ENCODE measurements at regions of chr11 and their contacts with region 1.

Region 1: DNA sequence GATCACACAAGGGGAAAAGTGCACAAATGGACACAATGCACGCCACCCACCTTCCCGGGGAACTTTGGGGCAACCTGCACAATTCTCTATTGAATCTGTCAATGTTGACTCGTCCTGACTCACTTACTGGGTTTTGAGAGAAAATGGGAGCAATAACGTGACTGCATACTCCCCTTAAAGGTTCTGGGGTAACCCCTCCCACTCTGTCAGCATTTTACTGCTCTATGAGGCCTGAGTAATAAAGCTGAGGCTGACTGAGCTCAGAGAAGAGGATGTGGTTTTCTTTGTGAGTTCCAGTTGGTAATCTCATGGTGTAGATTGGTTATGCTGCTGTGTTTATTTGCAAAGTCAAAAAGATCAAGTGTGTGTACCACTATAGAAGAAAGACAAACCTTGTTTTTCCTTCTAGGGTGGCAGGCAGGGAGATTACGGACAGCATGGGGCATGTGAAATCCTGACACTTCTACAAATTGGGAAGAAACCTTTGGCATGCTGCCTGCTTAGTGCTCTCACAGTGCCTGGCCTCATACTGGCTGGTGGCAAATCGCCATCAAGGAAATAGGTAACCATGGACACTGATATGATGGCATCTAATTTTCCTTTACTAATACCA is 16.1 kb upstream of the APOA1 start:
- DNase-seq: peak; percentile 81 to 91 (median 85)
- H3K4me3 ChIP-seq: peak overlapping the region; percentile 8 to 38
- H3K4me3 Mint-ChIP-seq: peak overlapping the region; percentile 53 to 90 (median 77)
- H3K27ac ChIP-seq: peak overlapping the region; percentile 52
- H3K27ac Mint-ChIP-seq: peak overlapping the region; percentile 83 to 98 (median 95)
- H3K4me1 ChIP-seq: peaks cover 81% of the 10 kb centered on the region
- H3K4me1 Mint-ChIP-seq: peaks cover 67 to 84% (median 74%) of the 10 kb centered on the region in 4 donors
- H3K27me3 ChIP-seq: no peaks in the 10 kb centered on the region
- H3K27me3 Mint-ChIP-seq: no peaks in the 10 kb centered on the region

Region 2: DNA sequence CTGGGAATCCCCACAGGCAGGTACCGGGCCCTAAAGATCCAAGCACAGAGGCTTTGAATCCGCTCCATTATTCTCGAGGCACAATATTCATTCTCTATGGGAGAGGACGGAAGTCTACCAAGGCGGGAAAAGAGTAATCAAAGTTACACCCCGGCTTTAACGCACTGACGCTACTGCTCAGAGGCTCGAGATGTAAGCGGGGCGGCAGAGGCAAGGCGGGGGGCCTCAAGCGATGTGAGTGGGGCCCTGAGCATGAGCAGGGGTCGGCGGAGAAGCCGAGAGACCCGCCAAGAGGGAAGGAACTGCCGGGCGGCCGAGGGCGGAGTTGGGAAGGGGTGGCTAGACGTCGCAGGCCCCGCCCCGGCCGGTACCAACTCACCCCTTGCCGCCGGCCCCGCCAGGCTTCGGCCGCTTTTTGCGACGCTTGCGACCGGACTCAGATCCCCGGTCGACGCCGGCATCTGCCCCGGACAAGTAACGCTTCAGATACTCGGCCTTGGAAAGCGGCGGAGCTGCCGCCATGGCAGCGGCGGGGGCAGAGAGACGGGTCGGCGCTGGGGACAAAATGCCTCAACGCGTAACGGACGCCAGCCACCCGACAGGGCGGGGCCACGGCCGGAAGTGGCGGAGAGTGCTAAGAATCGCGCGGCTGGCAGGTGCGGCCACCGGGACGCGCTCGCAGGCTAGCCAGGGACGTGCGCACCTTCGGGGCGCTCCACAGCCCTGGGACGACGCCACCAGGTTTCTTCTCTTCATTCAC is 80.9 kb before region 1 on chr11 and contains the start of gene BUD13:
- CTCF ChIA-PET with region 1: interaction called, 3 read pairs
- POLR2A ChIA-PET with region 1: interaction called, 4 read pairs
- intact Hi-C with region 1: loop called (anchors 5 kb)
- DNase-seq: peak; percentile 92 to 96 (median 93)
- H3K4me3 ChIP-seq: peak within 1 kb of the TSS; percentile 71 to 93
- H3K4me3 Mint-ChIP-seq: peak within 1 kb of the TSS; percentile 97 to 100 (median 98)
- H3K27ac ChIP-seq: peak within 1 kb of the TSS; percentile 94
- H3K27ac Mint-ChIP-seq: peak within 1 kb of the TSS; percentile 94 to 99 (median 98)
- H3K4me1 ChIP-seq: peaks cover 24% of the 10 kb centered on the region
- H3K4me1 Mint-ChIP-seq: peaks cover 24 to 47% (median 35%) of the 10 kb centered on the region in 4 donors
- H3K27me3 ChIP-seq: no peaks in the 10 kb centered on the region
- H3K27me3 Mint-ChIP-seq: no peaks in the 10 kb centered on the region
- total RNA-seq, gene BUD13: 19.9 to 23.1 TPM

Region 3: GRCh38 chr11:116787786-116788486 is 65.6 kb before region 1 on chr11 and contains the start of gene ZPR1:
- CTCF ChIA-PET with region 1: interaction called, 62 read pairs
- POLR2A ChIA-PET with region 1: interaction called, 45 read pairs
- intact Hi-C with region 1: loop called (anchors 1 kb)
- DNase-seq: peak; percentile 86 to 89 (median 86)
- H3K4me3 ChIP-seq: peak within 1 kb of the TSS; percentile 55 to 90
- H3K4me3 Mint-ChIP-seq: peak within 1 kb of the TSS; percentile 91 to 98 (median 97)
- H3K27ac ChIP-seq: peak within 1 kb of the TSS; percentile 84
- H3K27ac Mint-ChIP-seq: peak within 1 kb of the TSS; percentile 96 to 99 (median 98)
- H3K4me1 ChIP-seq: peaks cover 40% of the 10 kb centered on the region
- H3K4me1 Mint-ChIP-seq: peaks cover 30 to 66% (median 45%) of the 10 kb centered on the region in 4 donors
- H3K27me3 ChIP-seq: no peaks in the 10 kb centered on the region
- H3K27me3 Mint-ChIP-seq: peaks cover 0 to 2% of the 10 kb centered on the region in 2 donors
- total RNA-seq, gene ZPR1: 59.5 to 73.4 TPM

Region 4: GRCh38 chr11:116842909-116843308 is 10.7 kb before region 1 on chr11:
- CTCF ChIA-PET with region 1: interaction called, 168 read pairs
- POLR2A ChIA-PET with region 1: interaction called, 103 read pairs
- intact Hi-C with region 1: no loop called
- DNase-seq: no peak
- H3K4me3 ChIP-seq: no peak overlapping the region
- H3K4me3 Mint-ChIP-seq: no peak overlapping the region
- H3K27ac ChIP-seq: no peak overlapping the region
- H3K27ac Mint-ChIP-seq: peak overlapping the region in 1 of 7 donors; percentile 50
- H3K4me1 ChIP-seq: no peaks in the 10 kb centered on the region
- H3K4me1 Mint-ChIP-seq: peaks cover 0 to 5% (median 4%) of the 10 kb centered on the region in 4 donors
- H3K27me3 ChIP-seq: no peaks in the 10 kb centered on the region
- H3K27me3 Mint-ChIP-seq: no peaks in the 10 kb centered on the region

Region 5: GRCh38 chr11:117083011-117083935 is 229.7 kb after region 1 on chr11:
- CTCF ChIA-PET with region 1: no interaction called
- POLR2A ChIA-PET with region 1: no interaction called
- intact Hi-C with region 1: no loop called
- DNase-seq: no peak
- H3K4me3 ChIP-seq: no peak overlapping the region
- H3K4me3 Mint-ChIP-seq: peak overlapping the region in 5 of 8 donors; percentile 9 to 63 (median 45)
- H3K27ac ChIP-seq: no peak overlapping the region
- H3K27ac Mint-ChIP-seq: peak overlapping the region in 2 of 7 donors; percentile 2 to 82
- H3K4me1 ChIP-seq: peaks cover 46% of the 10 kb centered on the region
- H3K4me1 Mint-ChIP-seq: peaks cover 46 to 80% (median 61%) of the 10 kb centered on the region in 4 donors
- H3K27me3 ChIP-seq: no peaks in the 10 kb centered on the region
- H3K27me3 Mint-ChIP-seq: no peaks in the 10 kb centered on the region

Region 6: GRCh38 chr11:117143871-117144476 is 290.4 kb after region 1 on chr11 and contains the start of gene PAFAH1B2:
- CTCF ChIA-PET with region 1: interaction called, 4 read pairs
- POLR2A ChIA-PET with region 1: interaction called, 16 read pairs
- intact Hi-C with region 1: no loop called
- DNase-seq: peak; percentile 94 to 95 (median 94)
- H3K4me3 ChIP-seq: peak within 1 kb of the TSS; percentile 68 to 93
- H3K4me3 Mint-ChIP-seq: peak within 1 kb of the TSS; percentile 97 to 100 (median 99)
- H3K27ac ChIP-seq: peak within 1 kb of the TSS; percentile 70
- H3K27ac Mint-ChIP-seq: peak within 1 kb of the TSS; percentile 92 to 99 (median 98)
- H3K4me1 ChIP-seq: peaks cover 46% of the 10 kb centered on the region
- H3K4me1 Mint-ChIP-seq: peaks cover 33 to 56% (median 44%) of the 10 kb centered on the region in 4 donors
- H3K27me3 ChIP-seq: no peaks in the 10 kb centered on the region
- H3K27me3 Mint-ChIP-seq: peaks cover 2 to 6% of the 10 kb centered on the region in 2 donors
- total RNA-seq, gene PAFAH1B2: 61.6 to 64.2 TPM

Region 7: DNA sequence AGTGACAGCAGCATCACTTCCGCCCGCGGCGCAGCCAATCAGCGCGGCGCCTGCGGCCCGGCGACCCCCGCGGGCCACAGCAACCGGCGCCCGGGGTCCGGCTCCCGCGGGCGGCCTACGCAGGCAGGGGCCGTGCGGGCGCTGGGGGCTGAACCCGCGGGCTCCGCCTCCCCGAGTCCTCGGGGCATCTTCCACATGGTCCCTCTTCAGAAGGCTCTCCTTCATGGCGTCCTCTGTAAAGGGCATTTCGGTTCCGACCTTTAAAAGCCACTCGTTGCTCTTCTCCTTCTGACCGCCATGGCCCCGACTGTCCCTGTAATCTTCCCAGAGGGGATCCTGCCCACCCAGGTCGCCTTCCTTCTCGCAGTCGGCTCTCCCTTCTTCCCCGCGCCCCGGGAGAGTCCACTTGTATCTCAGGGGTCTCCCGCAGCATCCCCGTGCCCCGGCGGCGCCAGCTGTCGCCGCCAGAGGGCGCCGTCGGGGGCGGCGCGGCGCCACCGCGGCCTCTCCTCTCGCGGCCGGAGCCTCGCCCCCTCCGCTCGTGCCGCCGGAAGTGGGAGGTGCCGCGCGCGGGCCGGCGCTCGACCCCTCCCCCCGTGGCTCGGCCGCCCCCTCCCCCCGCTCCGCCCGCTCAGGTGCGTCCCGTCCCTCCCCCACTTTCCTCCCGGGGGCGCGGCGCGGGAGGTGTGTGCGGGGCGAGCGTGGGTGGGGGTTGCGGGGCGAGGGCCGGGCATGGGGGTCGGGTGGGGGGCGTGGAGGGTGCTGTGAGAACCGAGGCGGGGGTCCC is 378.7 kb after region 1 on chr11 and contains the start of gene RNF214:
- CTCF ChIA-PET with region 1: no interaction called
- POLR2A ChIA-PET with region 1: interaction called, 4 read pairs
- intact Hi-C with region 1: loop called (anchors 5 kb)
- DNase-seq: peak; percentile 65 to 83 (median 75)
- H3K4me3 ChIP-seq: peak within 1 kb of the TSS; percentile 87 to 93
- H3K4me3 Mint-ChIP-seq: peak within 1 kb of the TSS; percentile 97 to 100 (median 99)
- H3K27ac ChIP-seq: peak within 1 kb of the TSS; percentile 90
- H3K27ac Mint-ChIP-seq: peak within 1 kb of the TSS; percentile 95 to 100 (median 99)
- H3K4me1 ChIP-seq: peaks cover 47% of the 10 kb centered on the region
- H3K4me1 Mint-ChIP-seq: peaks cover 27 to 62% (median 49%) of the 10 kb centered on the region in 4 donors
- H3K27me3 ChIP-seq: no peaks in the 10 kb centered on the region
- H3K27me3 Mint-ChIP-seq: no peaks in the 10 kb centered on the region
- total RNA-seq, gene RNF214: 41.8 to 50.1 TPM

Region 8: DNA sequence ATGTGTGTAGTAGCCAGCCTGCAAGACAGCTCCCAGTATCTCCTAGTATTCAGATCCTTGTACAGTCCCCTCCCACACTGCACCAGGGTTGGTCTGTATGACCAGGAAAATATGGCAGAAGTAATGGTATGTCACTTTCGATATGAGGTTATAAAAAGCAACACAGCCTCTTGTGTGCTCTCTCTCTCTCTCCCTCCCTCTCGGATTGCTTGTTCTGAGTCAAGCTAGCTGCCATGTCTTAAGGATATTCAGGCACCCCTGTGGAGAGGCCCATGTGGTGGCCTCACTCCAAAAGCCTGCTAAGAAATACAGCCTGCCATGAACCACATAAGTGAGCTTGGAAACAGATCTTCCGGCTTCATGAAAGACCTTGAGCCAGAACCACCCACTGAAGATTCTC is 997.5 kb after region 1 on chr11:
- CTCF ChIA-PET with region 1: no interaction called
- POLR2A ChIA-PET with region 1: no interaction called
- intact Hi-C with region 1: no loop called
- DNase-seq: no peak
- H3K4me3 ChIP-seq: no peak overlapping the region
- H3K4me3 Mint-ChIP-seq: no peak overlapping the region
- H3K27ac ChIP-seq: no peak overlapping the region
- H3K27ac Mint-ChIP-seq: no peak overlapping the region
- H3K4me1 ChIP-seq: no peaks in the 10 kb centered on the region
- H3K4me1 Mint-ChIP-seq: peaks cover 6 to 7% (median 6%) of the 10 kb centered on the region in 4 donors
- H3K27me3 ChIP-seq: no peaks in the 10 kb centered on the region
- H3K27me3 Mint-ChIP-seq: peaks cover 8 to 9% of the 10 kb centered on the region in 2 donors

Measured in CD4-positive, alpha-beta memory T cell (primary cell).